ENCODE measurements at regions of chr4 and their contacts with region 1.

Region 1: DNA sequence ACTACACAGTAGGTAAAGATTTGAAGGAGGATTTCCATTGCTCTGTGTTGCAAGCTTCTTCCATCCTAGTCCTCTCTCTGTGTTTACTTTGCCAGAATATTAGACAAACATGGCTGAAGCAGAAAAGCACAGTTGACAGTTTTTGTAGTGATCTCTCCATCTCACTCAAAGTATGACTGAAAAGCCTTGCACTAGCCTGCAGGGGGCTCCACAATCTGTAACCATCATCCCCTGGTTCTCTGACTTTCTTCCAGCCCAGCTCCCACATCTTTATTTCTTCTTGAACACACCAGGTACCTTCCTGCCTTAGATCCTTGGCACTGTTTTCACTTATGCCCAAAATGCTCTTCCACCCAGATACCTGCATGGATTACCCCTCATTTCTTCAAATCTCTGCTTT is 34.1 kb upstream of the HHIP start:
- DNase-seq: no peak
- H3K4me3 Mint-ChIP-seq: no peak overlapping the region
- H3K27ac Mint-ChIP-seq: no peak overlapping the region
- H3K4me1 Mint-ChIP-seq: no peaks in the 10 kb centered on the region
- H3K27me3 Mint-ChIP-seq: no peaks in the 10 kb centered on the region

Region 2: GRCh38 chr4:145061318-145061920 is 449.6 kb after region 1 on chr4:
- CTCF ChIA-PET with region 1: interaction called, 3 read pairs
- POLR2A ChIA-PET with region 1: no interaction called
- intact Hi-C with region 1: loop called (anchors 5 kb)
- DNase-seq: no peak
- H3K4me3 Mint-ChIP-seq: no peak overlapping the region
- H3K27ac Mint-ChIP-seq: no peak overlapping the region
- H3K4me1 Mint-ChIP-seq: peaks cover 17% of the 10 kb centered on the region
- H3K27me3 Mint-ChIP-seq: no peaks in the 10 kb centered on the region